A549 (cell line): ENCODE measurements at regions of chr5 and their contacts with region 1.

Region 1: DNA sequence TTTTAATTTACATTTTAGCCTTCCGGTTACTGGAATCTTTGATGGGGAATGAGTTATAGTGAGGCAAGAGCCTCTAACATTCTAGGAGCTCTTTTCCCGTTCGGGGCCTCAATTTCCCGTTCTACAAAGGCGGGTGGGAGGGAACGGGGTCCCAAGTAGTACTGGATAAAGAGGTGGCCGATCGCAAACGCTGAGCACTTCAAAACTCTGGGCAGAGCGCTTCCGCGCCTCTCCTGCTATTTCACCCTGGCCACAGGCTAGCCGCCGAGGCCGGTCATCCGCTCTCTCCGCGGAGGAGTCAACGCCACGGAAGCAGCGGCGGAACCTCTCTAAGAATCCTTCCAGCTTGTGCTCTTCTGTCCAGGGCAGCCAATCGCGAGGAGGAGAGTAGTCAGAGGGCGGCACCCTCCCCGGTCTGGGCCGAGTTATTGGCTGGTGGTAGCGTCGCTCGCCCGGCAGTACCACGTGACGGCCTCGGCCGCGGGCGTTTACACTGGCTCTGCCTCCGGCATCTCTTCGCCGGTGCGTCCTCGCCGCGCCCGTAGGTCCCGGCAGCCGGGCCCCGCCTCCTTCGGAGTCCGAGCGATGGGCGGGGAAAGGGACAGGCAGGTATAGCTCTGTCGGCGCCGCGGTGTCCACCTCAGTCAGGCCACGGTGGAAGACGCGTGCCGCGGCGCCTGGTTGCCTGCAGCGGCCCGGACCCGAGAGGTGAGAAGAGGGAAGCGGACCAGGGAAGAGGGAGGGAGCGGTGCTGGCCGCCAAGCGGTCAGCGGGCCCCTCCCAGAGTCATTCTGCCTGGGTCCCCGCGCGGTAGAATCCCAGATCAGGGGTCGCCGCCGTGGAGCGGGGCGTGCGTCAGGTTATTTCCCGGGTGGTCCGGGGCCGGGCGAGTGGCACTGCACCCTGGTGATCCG is at the start of gene SLC26A2:
- DNase-seq: peak; percentile 96 to 98
- ATAC-seq: peak; percentile 89 to 94
- H3K4me3 ChIP-seq: peak within 1 kb of the TSS; percentile 81
- H3K27ac ChIP-seq: peak within 1 kb of the TSS; percentile 91 to 96
- H3K4me1 ChIP-seq: peaks cover 48% of the 10 kb centered on the region
- CTCF ChIP-seq: no peak
- EP300 ChIP-seq: no peak
- POLR2A ChIP-seq: peak; percentile 96
- RAD21 ChIP-seq: no peak
- polyA plus RNA-seq, gene SLC26A2: 23.2 and 31.9 TPM in 2 replicates

Region 2: DNA sequence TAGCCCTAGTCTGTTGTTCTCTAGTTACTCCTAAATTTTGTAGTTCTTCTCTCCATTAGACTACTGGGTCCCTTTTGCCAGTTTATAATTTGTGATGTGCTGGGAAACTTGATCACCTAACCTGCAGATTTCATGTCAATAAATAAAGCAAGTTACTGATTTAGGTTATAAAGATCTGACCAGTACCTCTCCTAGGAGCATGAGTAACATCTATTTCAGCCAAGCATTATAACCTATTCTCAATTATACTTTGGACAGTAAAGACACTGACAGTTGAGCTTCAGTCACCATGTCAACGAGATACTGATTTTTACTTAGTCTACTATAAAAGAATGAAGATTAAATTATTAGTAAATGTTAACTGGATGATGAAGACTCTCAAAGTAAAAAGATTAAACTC is 446.0 kb before region 1 on chr5:
- CTCF ChIA-PET with region 1: no interaction called
- POLR2A ChIA-PET with region 1: no interaction called
- DNase-seq: no peak
- ATAC-seq: no peak
- H3K4me3 ChIP-seq: no peak overlapping the region
- H3K27ac ChIP-seq: no peak overlapping the region
- H3K4me1 ChIP-seq: peaks cover 47% of the 10 kb centered on the region
- CTCF ChIP-seq: no peak
- EP300 ChIP-seq: no peak
- POLR2A ChIP-seq: no peak
- RAD21 ChIP-seq: no peak

Region 3: DNA sequence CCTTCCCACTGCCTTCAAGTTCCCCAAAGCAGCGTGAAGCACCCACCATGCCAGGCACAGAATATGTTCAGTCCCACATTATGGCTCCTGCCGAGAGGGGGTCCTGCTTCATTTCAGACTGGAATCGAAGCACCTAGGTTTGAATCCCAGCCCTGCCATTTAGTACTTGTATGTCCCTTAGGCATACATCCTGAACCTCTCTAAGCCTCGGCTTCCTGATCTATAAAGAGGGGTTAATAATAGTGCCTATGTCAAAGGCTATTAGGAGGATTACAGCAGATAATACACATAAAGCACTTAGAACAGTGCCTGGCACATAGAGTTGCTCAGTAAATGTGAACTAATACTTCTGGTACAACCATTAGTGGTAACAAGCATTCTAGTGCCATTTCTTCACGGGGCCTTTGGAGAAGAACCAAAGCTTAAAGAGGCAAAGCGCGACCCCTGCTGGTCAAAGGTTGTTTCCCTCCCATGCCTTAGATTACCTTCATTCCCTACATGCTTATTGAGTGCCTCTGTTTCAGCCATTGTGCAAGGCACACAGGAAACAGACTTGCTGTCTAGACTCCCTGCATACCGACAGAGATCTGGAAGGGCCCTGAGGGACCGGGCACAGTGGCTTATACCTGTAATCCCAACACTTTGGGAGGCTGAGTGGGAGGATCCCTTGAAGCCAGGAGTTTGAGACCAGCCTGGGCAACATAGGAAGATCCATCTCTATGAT is 132.2 kb before region 1 on chr5:
- CTCF ChIA-PET with region 1: interaction called, 594 read pairs
- POLR2A ChIA-PET with region 1: interaction called, 3 read pairs
- DNase-seq: peak; percentile 91 to 96
- ATAC-seq: peak; percentile 89 to 94
- H3K4me3 ChIP-seq: no peak overlapping the region
- H3K27ac ChIP-seq: peak overlapping the region; percentile 29 to 67; a peak in 4 of 6 replicates
- H3K4me1 ChIP-seq: peaks cover 5% of the 10 kb centered on the region; the same call in 1 of the 3 replicates
- CTCF ChIP-seq: peak; percentile 97
- EP300 ChIP-seq: no peak
- POLR2A ChIP-seq: no peak
- RAD21 ChIP-seq: peak; percentile 97

Region 4: GRCh38 chr5:149841851-149842793 is 118.4 kb before region 1 on chr5:
- CTCF ChIA-PET with region 1: interaction called, 594 read pairs
- POLR2A ChIA-PET with region 1: interaction called, 30 read pairs
- DNase-seq: no peak
- ATAC-seq: no peak
- H3K4me3 ChIP-seq: no peak overlapping the region
- H3K27ac ChIP-seq: no peak overlapping the region
- H3K4me1 ChIP-seq: peaks cover 20% of the 10 kb centered on the region
- CTCF ChIP-seq: no peak
- EP300 ChIP-seq: no peak
- POLR2A ChIP-seq: no peak
- RAD21 ChIP-seq: no peak

Region 5: GRCh38 chr5:149852641-149853330 is 107.7 kb before region 1 on chr5:
- CTCF ChIA-PET with region 1: interaction called, 331 read pairs
- POLR2A ChIA-PET with region 1: interaction called, 9 read pairs
- DNase-seq: peak; percentile 76 to 77
- ATAC-seq: peak; percentile 86 to 94
- H3K4me3 ChIP-seq: no peak overlapping the region
- H3K27ac ChIP-seq: peak overlapping the region; percentile 34 to 42; a peak in 2 of 6 replicates
- H3K4me1 ChIP-seq: peaks cover 13% of the 10 kb centered on the region
- CTCF ChIP-seq: peak; percentile 89
- EP300 ChIP-seq: no peak
- POLR2A ChIP-seq: no peak
- RAD21 ChIP-seq: peak; percentile 62 to 70

Region 6: GRCh38 chr5:149932445-149933350 is 27.8 kb before region 1 on chr5:
- CTCF ChIA-PET with region 1: interaction called, 386 read pairs
- POLR2A ChIA-PET with region 1: interaction called, 61 read pairs
- DNase-seq: peak; percentile 54 to 69
- ATAC-seq: peak; percentile 95
- H3K4me3 ChIP-seq: peak overlapping the region; percentile 41
- H3K27ac ChIP-seq: peak overlapping the region; percentile 88 to 92
- H3K4me1 ChIP-seq: peaks cover 47% of the 10 kb centered on the region
- CTCF ChIP-seq: peak; percentile 78
- EP300 ChIP-seq: no peak
- POLR2A ChIP-seq: no peak
- RAD21 ChIP-seq: peak; percentile 61 to 72

Region 7: GRCh38 chr5:149944666-149945065 is 15.9 kb before region 1 on chr5 and contains the start of gene PDE6A:
- CTCF ChIA-PET with region 1: interaction called, 54 read pairs
- POLR2A ChIA-PET with region 1: interaction called, 24 read pairs
- DNase-seq: no peak
- ATAC-seq: no peak
- H3K4me3 ChIP-seq: no peak within 1 kb of the TSS
- H3K27ac ChIP-seq: peak within 1 kb of the TSS; percentile 85 to 91; a peak in 4 of 6 replicates
- H3K4me1 ChIP-seq: peaks cover 38% of the 10 kb centered on the region
- CTCF ChIP-seq: no peak
- EP300 ChIP-seq: no peak
- POLR2A ChIP-seq: no peak
- RAD21 ChIP-seq: no peak
- polyA plus RNA-seq, gene PDE6A: 0.30 and 0.35 TPM in 2 replicates

Region 8: GRCh38 chr5:150014456-150014855 is 53.9 kb after region 1 on chr5:
- CTCF ChIA-PET with region 1: no interaction called
- POLR2A ChIA-PET with region 1: no interaction called
- DNase-seq: no peak
- ATAC-seq: no peak
- H3K4me3 ChIP-seq: no peak overlapping the region
- H3K27ac ChIP-seq: no peak overlapping the region
- H3K4me1 ChIP-seq: peaks cover 8% of the 10 kb centered on the region; the same call in 2 of the 3 replicates
- CTCF ChIP-seq: no peak
- EP300 ChIP-seq: no peak
- POLR2A ChIP-seq: no peak
- RAD21 ChIP-seq: no peak

Region 9: DNA sequence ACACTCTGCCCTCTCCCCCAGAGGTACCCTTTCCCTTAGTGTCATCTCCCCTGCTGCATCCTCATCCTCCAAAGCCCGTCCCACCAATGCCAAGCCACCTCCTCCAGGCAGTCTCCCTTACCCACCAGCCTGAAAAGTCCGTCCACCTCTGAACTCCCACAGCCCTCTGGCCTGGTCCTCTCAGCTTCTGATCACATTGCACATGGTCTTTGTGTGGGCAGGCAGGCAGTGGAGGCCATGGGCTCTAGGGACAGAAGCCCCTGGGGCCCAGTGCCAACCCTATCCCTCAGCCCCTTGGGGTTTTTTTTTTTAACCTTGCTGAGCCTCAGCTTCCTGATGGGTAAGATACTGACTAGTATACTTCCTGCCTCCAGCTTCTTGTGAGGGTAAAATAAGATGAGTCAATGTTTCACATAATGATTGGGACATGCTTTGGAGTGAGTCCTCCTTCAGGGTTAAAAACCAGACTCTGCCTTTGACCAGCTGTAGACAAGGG is 106.4 kb after region 1 on chr5:
- CTCF ChIA-PET with region 1: no interaction called
- POLR2A ChIA-PET with region 1: no interaction called
- DNase-seq: no peak
- ATAC-seq: no peak
- H3K4me3 ChIP-seq: no peak overlapping the region
- H3K27ac ChIP-seq: 0 out of 6 replicates have a peak overlapping the region, but pooled peaks of 1 of the 2 experiments have one; percentile 10
- H3K4me1 ChIP-seq: 0 out of 3 replicates have a peak, but pooled peaks cover 4% of the 10 kb centered on the region
- CTCF ChIP-seq: no peak
- EP300 ChIP-seq: no peak
- POLR2A ChIP-seq: no peak
- RAD21 ChIP-seq: no peak

Region 10: GRCh38 chr5:150081541-150082283 is 121.2 kb after region 1 on chr5:
- CTCF ChIA-PET with region 1: no interaction called
- POLR2A ChIA-PET with region 1: no interaction called
- DNase-seq: no peak
- ATAC-seq: peak in 1 of 2 experiments; percentile 53; a peak in 3 of 6 replicates
- H3K4me3 ChIP-seq: no peak overlapping the region
- H3K27ac ChIP-seq: no peak overlapping the region
- H3K4me1 ChIP-seq: no peaks in the 10 kb centered on the region
- CTCF ChIP-seq: no peak
- EP300 ChIP-seq: no peak
- POLR2A ChIP-seq: no peak
- RAD21 ChIP-seq: no peak